Right ventricle myocardium inferior (tissue), 1 donor: ENCODE measurements at regions of chr9 and their contacts with region 1.

Region 1: GRCh38 chr9:20356403-20357035 is 265.8 kb downstream of the MLLT3 start:
- DNase-seq: peak; percentile 53
- ATAC-seq: peak; percentile 80

Region 2: DNA sequence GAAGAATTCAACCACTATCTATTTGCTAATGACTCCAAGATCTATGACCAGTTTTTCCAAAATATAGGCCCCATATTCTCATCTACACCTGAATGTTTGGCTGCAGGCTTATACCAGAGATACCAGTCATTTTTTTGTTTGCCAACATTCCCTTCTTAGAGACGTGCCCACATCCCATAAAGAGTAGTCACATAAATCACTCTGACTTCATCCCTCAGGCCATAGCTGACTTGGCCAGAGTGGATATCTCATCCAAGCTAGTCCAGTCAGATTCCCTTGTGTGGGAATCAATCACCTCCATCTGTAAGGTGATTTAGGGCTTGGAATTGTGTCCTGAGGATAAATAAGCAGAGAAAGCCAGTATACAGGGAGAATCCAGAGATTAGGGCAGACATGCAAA is 443.4 kb before region 1 on chr9:
- intact Hi-C with region 1: no loop called
- DNase-seq: no peak
- ATAC-seq: no peak

Region 3: GRCh38 chr9:19925817-19926503 is 430.6 kb before region 1 on chr9:
- intact Hi-C with region 1: loop called (anchors 5 kb)
- DNase-seq: no peak
- ATAC-seq: peak; percentile 93

Region 4: GRCh38 chr9:20032413-20033006 is 324.0 kb before region 1 on chr9:
- intact Hi-C with region 1: loop called (anchors 10 kb)
- DNase-seq: no peak
- ATAC-seq: no peak

Region 5: DNA sequence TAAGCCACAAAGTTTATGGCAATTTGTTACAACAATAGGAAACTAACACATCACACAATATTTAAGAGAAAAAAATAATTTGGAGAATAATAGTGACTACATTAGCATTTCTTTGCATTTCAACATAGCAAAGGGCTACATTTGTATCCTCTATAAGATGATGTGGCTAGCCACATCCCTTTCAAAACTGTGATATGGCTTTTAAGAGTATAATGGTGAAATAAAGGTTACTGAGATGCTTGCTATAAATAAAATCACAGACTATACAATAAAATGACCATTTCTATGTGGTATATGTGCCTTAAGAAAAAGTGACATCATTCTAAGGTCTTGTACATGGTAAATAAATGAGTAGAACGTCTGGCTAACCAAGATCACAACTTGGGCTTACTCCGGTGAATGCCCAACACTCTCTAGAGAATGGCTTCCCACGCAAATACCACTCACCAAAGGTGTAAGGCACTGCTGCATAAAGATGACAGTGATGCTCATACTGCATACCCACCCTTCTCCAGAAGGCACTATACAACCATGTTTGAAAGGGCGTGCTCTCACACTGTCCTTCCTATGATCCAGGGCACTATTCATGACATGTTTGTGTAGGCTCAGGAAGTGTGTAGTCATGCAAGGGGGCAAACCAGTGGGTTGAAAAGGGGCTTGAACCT is 20.7 kb before region 1 on chr9:
- intact Hi-C with region 1: no loop called
- DNase-seq: no peak
- ATAC-seq: no peak

Region 6: GRCh38 chr9:20941174-20941690 is 584.7 kb after region 1 on chr9:
- intact Hi-C with region 1: loop called (anchors 1 kb)
- DNase-seq: no peak
- ATAC-seq: peak; percentile 89

Region 7: DNA sequence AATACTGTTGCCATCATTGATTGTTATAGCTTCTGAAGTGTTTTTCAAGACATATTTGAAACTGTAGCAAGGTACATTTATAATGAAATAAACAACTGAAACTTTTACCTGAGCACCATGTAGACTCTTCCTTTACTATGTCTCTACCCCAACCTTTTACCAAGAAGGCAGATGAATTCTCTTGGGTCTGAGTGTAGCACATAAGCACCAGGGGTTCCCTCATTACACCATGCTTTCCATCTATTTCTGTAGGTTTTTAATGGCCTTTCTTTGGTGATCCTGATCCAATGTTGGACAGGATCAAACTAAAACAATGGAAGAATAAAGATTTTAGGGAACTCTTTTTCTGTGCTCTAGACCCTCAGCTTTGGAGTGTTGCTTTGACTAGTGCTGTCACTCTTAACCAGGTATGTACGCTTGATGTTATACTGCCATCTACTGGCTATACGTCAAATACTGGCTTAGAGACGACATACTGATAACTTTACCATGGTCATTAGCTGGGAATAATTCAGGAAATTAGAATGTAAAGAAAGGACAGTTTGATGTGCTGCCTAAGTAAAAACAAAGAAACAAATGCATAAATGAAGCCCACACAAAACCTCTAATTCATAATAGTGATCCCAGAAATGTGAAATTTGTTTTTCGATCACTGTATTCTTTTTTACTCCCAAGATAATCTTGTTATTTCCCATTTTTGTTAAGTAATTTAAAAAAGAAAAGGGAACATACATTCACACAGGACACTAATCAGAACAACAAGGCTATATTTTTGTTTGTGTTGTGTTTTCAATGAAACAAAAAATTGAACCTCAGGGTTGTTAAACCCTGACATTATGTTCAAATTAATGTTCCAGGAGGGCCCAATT is 754.4 kb after region 1 on chr9:
- intact Hi-C with region 1: loop called (anchors 10 kb)
- DNase-seq: no peak
- ATAC-seq: peak; percentile 65